Activated CD4-positive, alpha-beta memory T cell treated with anti-CD3 and anti-CD28 coated beads for 36 hours (primary cell): ENCODE measurements at regions of chr13 and their contacts with region 1.

Region 1: GRCh38 chr13:85543144-85543543 is 256.1 kb downstream of the SLITRK6 start:
- DNase-seq: no peak
- H3K4me3 Mint-ChIP-seq: no peak overlapping the region
- H3K27ac Mint-ChIP-seq: no peak overlapping the region
- H3K4me1 Mint-ChIP-seq: peaks cover 4% of the 10 kb centered on the region
- H3K27me3 Mint-ChIP-seq: no peaks in the 10 kb centered on the region

Region 2: DNA sequence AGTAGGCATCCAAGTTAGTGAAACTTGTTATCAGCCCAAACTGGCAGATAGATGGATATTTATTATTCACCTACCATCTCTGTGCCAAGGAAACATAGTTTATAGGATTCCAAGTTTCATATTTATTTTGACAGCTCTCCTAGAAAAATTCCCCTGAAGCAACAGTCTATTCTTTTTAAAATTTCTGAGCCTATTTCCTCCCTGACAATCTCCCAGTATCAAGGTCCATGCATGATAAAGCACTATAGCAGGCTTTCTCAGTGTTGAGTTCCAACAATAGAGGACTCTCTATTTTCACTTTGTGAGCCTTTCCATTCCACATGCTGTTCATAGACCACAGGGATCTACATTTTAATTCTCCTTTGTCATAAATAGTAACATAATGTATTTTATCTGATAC is 56.5 kb before region 1 on chr13:
- CTCF ChIA-PET with region 1: no interaction called
- POLR2A ChIA-PET with region 1: no interaction called
- intact Hi-C with region 1: loop called (anchors 10 kb)
- DNase-seq: no peak
- H3K4me3 Mint-ChIP-seq: no peak overlapping the region
- H3K27ac Mint-ChIP-seq: no peak overlapping the region
- H3K4me1 Mint-ChIP-seq: no peaks in the 10 kb centered on the region
- H3K27me3 Mint-ChIP-seq: no peaks in the 10 kb centered on the region

Region 3: DNA sequence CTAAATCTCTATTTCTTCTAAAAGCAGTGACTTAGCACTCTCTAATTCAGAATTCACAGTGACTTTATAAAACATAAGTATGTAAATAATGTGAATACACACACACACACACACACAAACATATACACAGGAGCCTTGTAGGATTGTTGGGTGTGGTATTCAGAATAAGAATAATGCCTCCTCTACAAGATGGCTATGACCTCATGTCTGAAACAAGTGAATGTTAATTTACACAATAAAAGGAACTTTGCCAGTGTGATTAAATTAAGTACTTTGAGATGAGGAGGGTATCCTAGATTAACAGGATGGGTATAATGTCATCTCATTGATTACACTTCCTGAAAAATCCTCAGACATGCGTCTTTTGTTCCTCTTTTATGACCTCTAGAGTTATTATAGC is 21.5 kb after region 1 on chr13:
- CTCF ChIA-PET with region 1: no interaction called
- POLR2A ChIA-PET with region 1: no interaction called
- intact Hi-C with region 1: no loop called
- DNase-seq: no peak
- H3K4me3 Mint-ChIP-seq: no peak overlapping the region
- H3K27ac Mint-ChIP-seq: no peak overlapping the region
- H3K4me1 Mint-ChIP-seq: no peaks in the 10 kb centered on the region
- H3K27me3 Mint-ChIP-seq: no peaks in the 10 kb centered on the region